ENCODE measurements at regions of chr19 and their contacts with region 1.

Region 1: GRCh38 chr19:40425450-40426287 is at the start of gene SERTAD1:
- DNase-seq: peak; percentile 99
- ATAC-seq: peak; percentile 90
- H3K4me3 ChIP-seq: peak within 1 kb of the TSS; percentile 71
- H3K27ac ChIP-seq: peak within 1 kb of the TSS; percentile 98
- H3K4me1 ChIP-seq: peaks cover 2% of the 10 kb centered on the region; the same call in 1 of the 2 replicates
- H3K27me3 ChIP-seq: no peaks in the 10 kb centered on the region
- CTCF ChIP-seq: peak; percentile 49
- POLR2A ChIP-seq: peak; percentile 99
- RAD21 ChIP-seq: no peak
- total RNA-seq, gene SERTAD1: 25.6 and 27.4 TPM in 2 replicates

Region 2: GRCh38 chr19:40348125-40348913 is 77.3 kb before region 1 on chr19 and contains the starts of genes C19orf47 and PLD3:
- CTCF ChIA-PET with region 1: no interaction called
- POLR2A ChIA-PET with region 1: no interaction called
- dilution Hi-C with region 1: no loop called
- in situ Hi-C with region 1: no loop called
- intact Hi-C with region 1: loop called (anchors 2 kb)
- DNase-seq: peak; percentile 99
- ATAC-seq: peak; percentile 97
- H3K4me3 ChIP-seq: peak within 1 kb of the TSS; percentile 70
- H3K27ac ChIP-seq: peak within 1 kb of the TSS; percentile 63
- H3K4me1 ChIP-seq: peaks cover 4% of the 10 kb centered on the region; the same call in 1 of the 2 replicates
- H3K27me3 ChIP-seq: no peaks in the 10 kb centered on the region
- CTCF ChIP-seq: no peak
- POLR2A ChIP-seq: peak; percentile 69
- RAD21 ChIP-seq: no peak
- total RNA-seq, gene C19orf47: 3.6 and 4.4 TPM in 2 replicates
- total RNA-seq, gene PLD3: 117 and 120 TPM in 2 replicates

Region 3: GRCh38 chr19:40576585-40577451 is 151.1 kb after region 1 on chr19 and contains the start of gene SHKBP1:
- CTCF ChIA-PET with region 1: no interaction called
- POLR2A ChIA-PET with region 1: no interaction called
- dilution Hi-C with region 1: no loop called
- in situ Hi-C with region 1: no loop called
- intact Hi-C with region 1: no loop called
- DNase-seq: peak; percentile 92
- ATAC-seq: peak; percentile 99
- H3K4me3 ChIP-seq: peak within 1 kb of the TSS; percentile 96
- H3K27ac ChIP-seq: peak within 1 kb of the TSS; percentile 85
- H3K4me1 ChIP-seq: peaks cover 4% of the 10 kb centered on the region
- H3K27me3 ChIP-seq: no peaks in the 10 kb centered on the region
- CTCF ChIP-seq: no peak
- POLR2A ChIP-seq: peak; percentile 50; the same call in 1 of the 2 replicates
- RAD21 ChIP-seq: no peak
- total RNA-seq, gene SHKBP1: 15.6 and 16.1 TPM in 2 replicates